GM13977 (cell line): ENCODE measurements at regions of chr1 and their contacts with region 1.

Region 1: GRCh38 chr1:202750758-202751157 is 40.5 kb upstream of the SYT2 start:
- DNase-seq: no peak
- CTCF ChIP-seq: no peak

Region 2: GRCh38 chr1:202998836-202999750 is 248.3 kb after region 1 on chr1:
- in situ Hi-C with region 1: loop called (anchors 25 kb)
- DNase-seq: peak; percentile 45
- CTCF ChIP-seq: peak; percentile 83